Panc1 (cell line): ENCODE measurements at regions of chr17 and their contacts with region 1.

Region 1: GRCh38 chr17:19614900-19615299 is 33.7 kb upstream of the ALDH3A2 start:
- DNase-seq: no peak
- ATAC-seq: no peak
- H3K4me3 ChIP-seq: no peak overlapping the region
- H3K27ac ChIP-seq: no peak overlapping the region
- H3K4me1 ChIP-seq: no peaks in the 10 kb centered on the region
- H3K27me3 ChIP-seq: no peaks in the 10 kb centered on the region
- CTCF ChIP-seq: no peak; the same call in 1 of the 2 replicates

Region 2: GRCh38 chr17:19567216-19568015 is 47.5 kb before region 1 on chr17:
- CTCF ChIA-PET with region 1: no interaction called
- POLR2A ChIA-PET with region 1: no interaction called
- in situ Hi-C with region 1: no loop called
- intact Hi-C with region 1: no loop called
- DNase-seq: no peak
- ATAC-seq: no peak
- H3K4me3 ChIP-seq: no peak overlapping the region
- H3K27ac ChIP-seq: no peak overlapping the region
- H3K4me1 ChIP-seq: no peaks in the 10 kb centered on the region; the same call in 1 of the 2 replicates
- H3K27me3 ChIP-seq: no peaks in the 10 kb centered on the region
- CTCF ChIP-seq: no peak

Region 3: GRCh38 chr17:19630661-19631060 is 15.8 kb after region 1 on chr17:
- CTCF ChIA-PET with region 1: no interaction called
- POLR2A ChIA-PET with region 1: no interaction called
- in situ Hi-C with region 1: no loop called
- intact Hi-C with region 1: no loop called
- DNase-seq: no peak
- ATAC-seq: no peak
- H3K4me3 ChIP-seq: no peak overlapping the region
- H3K27ac ChIP-seq: no peak overlapping the region
- H3K4me1 ChIP-seq: no peaks in the 10 kb centered on the region
- H3K27me3 ChIP-seq: no peaks in the 10 kb centered on the region
- CTCF ChIP-seq: no peak

Region 4: GRCh38 chr17:19791918-19792550 is 177.1 kb after region 1 on chr17:
- CTCF ChIA-PET with region 1: no interaction called
- POLR2A ChIA-PET with region 1: interaction called, 11 read pairs
- in situ Hi-C with region 1: no loop called
- intact Hi-C with region 1: no loop called
- DNase-seq: no peak
- ATAC-seq: no peak
- H3K4me3 ChIP-seq: no peak overlapping the region
- H3K27ac ChIP-seq: no peak overlapping the region
- H3K4me1 ChIP-seq: no peaks in the 10 kb centered on the region
- H3K27me3 ChIP-seq: no peaks in the 10 kb centered on the region
- CTCF ChIP-seq: no peak